ENCODE measurements at regions of chr9 and their contacts with region 1.

Region 1: GRCh38 chr9:38263532-38263931 is 129.0 kb upstream of the ALDH1B1 start:
- ATAC-seq: peak in 3 of 8 experiments; percentile 52 to 59 (median 57)
- H3K4me3 ChIP-seq: no peak overlapping the region
- H3K27ac ChIP-seq: no peak overlapping the region
- H3K4me1 ChIP-seq: no peaks in the 10 kb centered on the region

Region 2: GRCh38 chr9:38117651-38118050 is 145.9 kb before region 1 on chr9:
- in situ Hi-C with region 1: no loop called
- ATAC-seq: peak in 4 of 8 experiments; percentile 34 to 93 (median 62)
- H3K4me3 ChIP-seq: no peak overlapping the region
- H3K27ac ChIP-seq: peak overlapping the region in 1 of 2 donors; percentile 6
- H3K4me1 ChIP-seq: peaks cover 32 to 33% of the 10 kb centered on the region in 2 donors

Region 3: GRCh38 chr9:38160613-38161215 is 102.8 kb before region 1 on chr9:
- in situ Hi-C with region 1: loop called in 1 of 9 experiments (anchors 25 kb)
- ATAC-seq: peak in 3 of 8 experiments; percentile 44 to 63 (median 62)
- H3K4me3 ChIP-seq: no peak overlapping the region
- H3K27ac ChIP-seq: no peak overlapping the region
- H3K4me1 ChIP-seq: no peaks in the 10 kb centered on the region

Region 4: GRCh38 chr9:38361473-38361850 is 97.9 kb after region 1 on chr9:
- in situ Hi-C with region 1: no loop called
- ATAC-seq: peak in 5 of 8 experiments; percentile 10 to 45 (median 37)
- H3K4me3 ChIP-seq: no peak overlapping the region
- H3K27ac ChIP-seq: no peak overlapping the region
- H3K4me1 ChIP-seq: peaks cover 38 to 39% of the 10 kb centered on the region in 2 donors

Region 5: GRCh38 chr9:38371495-38371894 is 108.0 kb after region 1 on chr9:
- in situ Hi-C with region 1: no loop called
- ATAC-seq: peak in 7 of 8 experiments; percentile 24 to 80 (median 42)
- H3K4me3 ChIP-seq: no peak overlapping the region
- H3K27ac ChIP-seq: no peak overlapping the region
- H3K4me1 ChIP-seq: peaks cover 25 to 28% of the 10 kb centered on the region in 2 donors

Region 6: GRCh38 chr9:38432922-38433510 is 169.5 kb after region 1 on chr9:
- in situ Hi-C with region 1: no loop called
- ATAC-seq: peak in 5 of 8 experiments; percentile 27 to 61 (median 35)
- H3K4me3 ChIP-seq: no peak overlapping the region
- H3K27ac ChIP-seq: no peak overlapping the region
- H3K4me1 ChIP-seq: peaks cover 19 to 20% of the 10 kb centered on the region in 2 donors

Measured in motor neuron (in vitro differentiated cells).